Naive thymus-derived CD4-positive, alpha-beta T cell (primary cell): ENCODE measurements at regions of chr15 and their contacts with region 1.

Region 1: GRCh38 chr15:30979457-30979856 is 12.0 kb downstream of the MTMR10 start:
- DNase-seq: no peak
- ATAC-seq: peak; percentile 63
- H3K4me3 ChIP-seq: no peak overlapping the region
- H3K4me3 Mint-ChIP-seq: peak overlapping the region in 5 of 10 donors; percentile 5 to 37 (median 8)
- H3K27ac ChIP-seq: no peak overlapping the region
- H3K27ac Mint-ChIP-seq: peak overlapping the region in 1 of 9 donors; percentile 6
- H3K4me1 ChIP-seq: no peaks in the 10 kb centered on the region
- H3K4me1 Mint-ChIP-seq: peaks cover 22 to 79% (median 65%) of the 10 kb centered on the region in 7 donors
- H3K27me3 ChIP-seq: no peaks in the 10 kb centered on the region
- H3K27me3 Mint-ChIP-seq: no peaks in the 10 kb centered on the region

Region 2: DNA sequence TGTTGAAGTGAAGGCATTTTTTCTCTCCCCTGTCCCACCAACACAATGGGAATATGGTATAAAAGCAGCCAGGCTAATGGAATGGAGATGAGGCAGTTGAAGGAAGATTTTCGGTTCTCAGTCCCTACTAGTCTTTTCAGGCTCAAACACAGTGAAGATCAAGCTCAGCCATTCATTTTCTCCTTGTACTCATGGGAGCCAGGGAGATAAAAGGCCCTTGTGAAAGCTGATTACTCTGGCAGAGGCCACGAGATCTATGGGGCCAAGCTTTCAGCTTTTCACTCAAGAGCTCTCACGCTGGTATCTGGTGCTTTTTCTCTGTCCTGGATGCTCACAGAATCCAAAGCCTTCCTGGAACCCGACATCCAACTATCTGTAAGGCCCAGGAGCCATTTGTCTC is 90.3 kb before region 1 on chr15:
- CTCF ChIA-PET with region 1: no interaction called
- POLR2A ChIA-PET with region 1: no interaction called
- intact Hi-C with region 1: no loop called
- DNase-seq: no peak
- ATAC-seq: no peak
- H3K4me3 ChIP-seq: no peak overlapping the region
- H3K4me3 Mint-ChIP-seq: no peak overlapping the region
- H3K27ac ChIP-seq: no peak overlapping the region
- H3K27ac Mint-ChIP-seq: no peak overlapping the region
- H3K4me1 ChIP-seq: no peaks in the 10 kb centered on the region
- H3K4me1 Mint-ChIP-seq: peaks cover 0 to 12% (median 0%) of the 10 kb centered on the region in 7 donors
- H3K27me3 ChIP-seq: no peaks in the 10 kb centered on the region
- H3K27me3 Mint-ChIP-seq: no peaks in the 10 kb centered on the region

Region 3: GRCh38 chr15:30962079-30962478 is 17.4 kb before region 1 on chr15:
- CTCF ChIA-PET with region 1: no interaction called
- POLR2A ChIA-PET with region 1: interaction called, 3 read pairs
- intact Hi-C with region 1: loop called in 1 of 2 experiments (anchors 2 kb)
- DNase-seq: no peak
- ATAC-seq: no peak
- H3K4me3 ChIP-seq: no peak overlapping the region
- H3K4me3 Mint-ChIP-seq: peak overlapping the region in 1 of 10 donors; percentile 36
- H3K27ac ChIP-seq: no peak overlapping the region
- H3K27ac Mint-ChIP-seq: peak overlapping the region in 6 of 9 donors; percentile 43 to 80 (median 72)
- H3K4me1 ChIP-seq: peaks cover 0 to 8% of the 10 kb centered on the region in 2 donors
- H3K4me1 Mint-ChIP-seq: peaks cover 8 to 44% (median 36%) of the 10 kb centered on the region in 7 donors
- H3K27me3 ChIP-seq: no peaks in the 10 kb centered on the region
- H3K27me3 Mint-ChIP-seq: no peaks in the 10 kb centered on the region